ENCODE measurements at regions of chr1 and their contacts with region 1.

Region 1: GRCh38 chr1:92476071-92476631 is 10.6 kb downstream of the GFI1 start:
- DNase-seq: peak; percentile 15 to 93 (median 64)
- ATAC-seq: peak; percentile 90
- H3K4me3 ChIP-seq: no peak overlapping the region
- H3K4me3 Mint-ChIP-seq: peak overlapping the region; percentile 26
- H3K27ac ChIP-seq: peak overlapping the region in 1 of 2 experiments; percentile 70
- H3K27ac Mint-ChIP-seq: peak overlapping the region; percentile 81
- H3K4me1 ChIP-seq: peaks cover 41% of the 10 kb centered on the region
- H3K4me1 Mint-ChIP-seq: peaks cover 64% of the 10 kb centered on the region
- H3K27me3 ChIP-seq: no peaks in the 10 kb centered on the region
- H3K27me3 Mint-ChIP-seq: no peaks in the 10 kb centered on the region
- CTCF ChIP-seq: no peak

Region 2: DNA sequence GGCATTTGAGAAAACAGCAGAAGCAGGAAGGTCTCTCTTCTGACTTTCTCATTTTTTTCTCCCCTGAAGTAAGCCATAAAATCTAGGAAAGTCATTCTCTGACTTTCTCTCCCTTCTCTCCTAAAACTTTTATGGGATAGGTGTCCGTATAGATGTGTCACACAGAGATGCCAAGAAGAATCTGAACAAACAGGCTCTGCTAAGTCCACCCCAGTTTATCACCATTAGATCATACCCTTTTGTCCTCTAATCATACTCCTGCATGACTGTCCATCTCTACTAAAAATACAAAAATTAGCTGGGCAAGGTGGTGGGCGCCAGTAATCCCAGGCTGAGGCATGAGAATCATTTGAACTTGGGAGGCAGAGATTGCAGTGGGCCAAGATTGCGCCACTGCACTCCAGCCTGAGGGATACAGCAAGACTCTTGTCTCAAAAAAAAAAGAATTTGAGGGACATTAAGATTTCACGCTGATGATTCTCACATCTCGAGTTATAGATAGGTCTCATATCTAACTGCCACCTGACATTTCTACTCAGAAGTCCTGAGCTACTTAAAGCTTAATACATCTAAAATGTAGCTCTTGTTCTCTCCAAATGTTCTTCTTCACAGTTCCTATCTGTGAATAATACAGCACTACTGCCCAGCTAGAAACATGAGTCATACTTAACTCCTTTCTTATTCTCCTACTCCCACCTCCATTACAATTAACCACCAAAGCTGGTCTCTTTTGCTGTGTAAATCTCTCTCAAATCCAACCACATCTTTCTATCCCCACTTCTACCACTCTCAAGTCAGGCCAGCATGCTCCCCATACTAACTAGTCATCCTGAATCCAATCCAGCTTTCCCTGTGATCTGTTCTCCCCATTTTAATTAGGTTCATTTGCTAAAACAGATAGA is 1502.0 kb before region 1 on chr1:
- CTCF ChIA-PET with region 1: no interaction called
- POLR2A ChIA-PET with region 1: no interaction called
- intact Hi-C with region 1: no loop called
- DNase-seq: no peak
- ATAC-seq: no peak
- H3K4me3 ChIP-seq: no peak overlapping the region
- H3K4me3 Mint-ChIP-seq: no peak overlapping the region
- H3K27ac ChIP-seq: no peak overlapping the region
- H3K27ac Mint-ChIP-seq: peak overlapping the region; percentile 16
- H3K4me1 ChIP-seq: no peaks in the 10 kb centered on the region
- H3K4me1 Mint-ChIP-seq: peaks cover 55% of the 10 kb centered on the region
- H3K27me3 ChIP-seq: no peaks in the 10 kb centered on the region
- H3K27me3 Mint-ChIP-seq: no peaks in the 10 kb centered on the region
- CTCF ChIP-seq: no peak

Region 3: DNA sequence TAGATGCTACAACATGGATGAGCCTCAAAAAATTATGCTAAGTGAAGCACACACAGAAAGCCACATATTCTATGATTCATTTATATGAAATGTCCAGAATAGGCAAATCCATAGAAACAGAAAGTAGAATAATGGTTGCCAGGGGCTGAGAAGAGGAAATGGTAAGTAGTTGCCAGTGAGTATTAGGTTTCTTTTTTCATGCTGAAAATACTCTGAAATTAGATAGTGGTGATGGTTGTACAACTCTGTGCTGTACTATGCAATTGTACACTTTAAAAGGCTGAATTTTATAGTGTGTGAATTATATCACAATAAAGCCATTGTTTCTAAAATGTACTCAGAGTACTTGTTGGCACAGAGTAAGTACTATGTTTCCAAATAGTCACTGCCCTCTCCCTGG is 26.1 kb after region 1 on chr1:
- CTCF ChIA-PET with region 1: no interaction called
- POLR2A ChIA-PET with region 1: no interaction called
- intact Hi-C with region 1: loop called in 1 of 2 experiments (anchors 1 kb)
- DNase-seq: no peak
- ATAC-seq: no peak
- H3K4me3 ChIP-seq: no peak overlapping the region
- H3K4me3 Mint-ChIP-seq: no peak overlapping the region
- H3K27ac ChIP-seq: no peak overlapping the region
- H3K27ac Mint-ChIP-seq: no peak overlapping the region
- H3K4me1 ChIP-seq: no peaks in the 10 kb centered on the region
- H3K4me1 Mint-ChIP-seq: peaks cover 12% of the 10 kb centered on the region
- H3K27me3 ChIP-seq: no peaks in the 10 kb centered on the region
- H3K27me3 Mint-ChIP-seq: no peaks in the 10 kb centered on the region
- CTCF ChIP-seq: no peak

Region 4: DNA sequence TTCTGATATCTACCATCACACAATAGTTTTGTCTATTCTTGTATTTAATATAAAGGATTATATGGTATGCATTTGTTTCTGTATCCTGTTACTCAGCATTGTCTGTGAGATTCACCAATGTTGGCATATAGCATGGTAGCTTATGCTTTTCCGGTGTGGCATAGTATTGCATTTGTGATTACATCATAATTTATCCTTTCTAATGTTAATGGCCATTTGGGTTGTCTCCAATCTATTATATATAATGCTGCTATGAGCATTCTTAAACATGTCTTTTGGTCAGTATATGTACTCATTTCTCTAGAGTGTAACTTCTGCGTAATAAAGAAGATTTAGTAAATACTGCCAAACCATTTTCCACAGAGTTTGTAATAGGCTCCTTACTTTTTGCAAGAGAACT is 51.5 kb after region 1 on chr1:
- CTCF ChIA-PET with region 1: no interaction called
- POLR2A ChIA-PET with region 1: no interaction called
- intact Hi-C with region 1: no loop called
- DNase-seq: no peak
- ATAC-seq: no peak
- H3K4me3 ChIP-seq: no peak overlapping the region
- H3K4me3 Mint-ChIP-seq: no peak overlapping the region
- H3K27ac ChIP-seq: no peak overlapping the region
- H3K27ac Mint-ChIP-seq: no peak overlapping the region
- H3K4me1 ChIP-seq: no peaks in the 10 kb centered on the region
- H3K4me1 Mint-ChIP-seq: peaks cover 14% of the 10 kb centered on the region
- H3K27me3 ChIP-seq: no peaks in the 10 kb centered on the region
- H3K27me3 Mint-ChIP-seq: no peaks in the 10 kb centered on the region
- CTCF ChIP-seq: no peak

Region 5: DNA sequence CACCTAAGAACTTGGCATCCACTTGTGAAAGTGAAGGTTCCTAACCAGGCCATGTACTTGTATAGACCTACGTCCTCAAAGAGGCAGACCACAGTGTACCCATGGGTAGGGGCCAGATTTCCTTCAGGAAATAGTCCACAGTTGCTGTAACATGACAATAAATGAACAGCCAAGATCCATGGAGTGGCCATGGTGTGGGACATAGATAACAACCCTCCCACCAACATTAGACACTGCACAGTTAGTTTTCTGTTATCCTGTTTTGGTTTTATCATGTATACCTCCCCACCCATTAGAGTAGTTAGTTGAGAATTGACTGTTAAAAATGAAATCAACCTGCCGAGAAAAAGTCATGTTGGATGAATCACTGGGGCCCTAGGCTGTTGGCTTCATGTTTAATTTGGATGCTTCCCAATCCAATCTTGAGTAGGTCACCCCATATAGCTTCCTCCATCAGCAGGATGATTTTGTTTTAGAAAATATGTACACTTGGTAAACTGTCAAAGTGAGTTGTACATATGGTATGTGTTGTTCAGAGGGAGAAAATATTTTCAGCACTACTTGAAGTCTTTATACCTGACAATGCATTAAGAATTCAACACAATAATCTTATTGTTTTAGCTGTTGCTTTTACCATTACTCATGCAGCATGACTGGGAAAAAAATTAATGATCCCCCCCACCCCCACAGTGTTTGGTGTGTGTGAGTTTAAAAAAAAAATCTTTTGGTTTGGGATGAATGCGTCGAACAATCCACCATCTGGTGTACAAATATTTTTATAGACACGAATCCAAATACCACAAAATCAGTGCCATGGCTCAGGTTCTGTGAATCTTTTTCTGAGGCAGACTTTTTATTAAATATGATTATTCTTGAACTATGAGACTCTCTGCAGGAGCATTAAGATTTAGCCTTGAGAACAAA is 1849.5 kb after region 1 on chr1:
- CTCF ChIA-PET with region 1: no interaction called
- POLR2A ChIA-PET with region 1: no interaction called
- intact Hi-C with region 1: no loop called
- DNase-seq: no peak
- ATAC-seq: no peak
- H3K4me3 ChIP-seq: no peak overlapping the region
- H3K4me3 Mint-ChIP-seq: no peak overlapping the region
- H3K27ac ChIP-seq: no peak overlapping the region
- H3K27ac Mint-ChIP-seq: no peak overlapping the region
- H3K4me1 ChIP-seq: no peaks in the 10 kb centered on the region
- H3K4me1 Mint-ChIP-seq: no peaks in the 10 kb centered on the region
- H3K27me3 ChIP-seq: no peaks in the 10 kb centered on the region
- H3K27me3 Mint-ChIP-seq: peaks cover 21% of the 10 kb centered on the region
- CTCF ChIP-seq: no peak

Measured in CD8-positive, alpha-beta T cell (primary cell).